Testis (tissue), 5 donors: ENCODE measurements at regions of chr15 and their contacts with region 1.

Region 1: GRCh38 chr15:98946301-98947255 is 61.0 kb downstream of the PGPEP1L start:
- DNase-seq: no peak
- H3K4me3 ChIP-seq: no peak overlapping the region
- H3K27ac ChIP-seq: peak overlapping the region in 1 of 2 donors; percentile 0
- H3K4me1 ChIP-seq: peaks cover 10% of the 10 kb centered on the region
- H3K27me3 ChIP-seq: no peaks in the 10 kb centered on the region
- CTCF ChIP-seq: no peak
- POLR2A ChIP-seq: no peak

Region 2: DNA sequence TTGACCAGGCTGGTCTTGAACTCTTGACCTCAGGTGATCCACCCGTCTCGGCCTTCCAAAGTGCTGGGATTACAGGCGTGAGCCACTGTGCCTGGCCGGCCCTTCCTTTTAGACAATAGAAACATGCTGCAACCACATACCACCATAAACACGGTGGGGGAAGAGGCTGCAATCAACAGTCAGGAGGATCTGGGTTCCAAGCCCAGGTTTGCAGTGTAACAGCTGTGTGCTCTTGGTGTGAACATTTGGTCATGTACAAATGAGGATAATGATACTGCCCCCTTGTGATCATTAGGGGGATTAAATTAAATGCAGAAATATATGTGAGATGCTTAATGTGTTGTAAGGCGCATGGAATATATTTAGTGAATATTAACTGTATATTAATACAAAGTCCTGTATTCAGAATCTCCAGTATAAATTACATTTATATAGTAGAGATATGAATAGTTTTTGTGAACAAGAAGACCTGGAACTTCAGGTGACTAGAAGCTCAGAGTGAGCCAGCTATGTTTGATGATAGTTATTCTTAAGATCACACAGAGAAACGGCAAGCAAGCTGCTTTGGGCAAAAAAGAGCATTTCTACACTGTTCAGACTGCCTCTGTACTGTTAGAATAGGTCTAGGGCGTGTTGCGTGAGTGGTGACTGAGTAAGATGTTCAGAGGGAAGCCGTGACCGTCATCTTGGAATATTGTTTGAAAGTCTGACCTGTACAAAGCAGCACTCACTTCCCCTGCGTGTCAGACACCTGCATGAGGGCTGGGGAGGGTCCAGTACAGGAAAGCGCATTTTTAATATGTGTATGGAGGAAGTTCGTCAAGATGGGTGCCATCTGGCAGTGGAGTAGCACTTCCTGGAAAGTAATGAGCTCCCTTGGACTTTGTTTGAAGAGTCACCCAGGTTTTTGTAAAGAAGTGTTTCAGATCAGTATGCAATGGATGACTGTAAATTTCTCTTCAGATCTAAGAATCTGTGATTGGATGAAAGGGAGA is 64.8 kb before region 1 on chr15:
- intact Hi-C with region 1: loop called (anchors 5 kb)
- DNase-seq: no peak
- H3K4me3 ChIP-seq: no peak overlapping the region
- H3K27ac ChIP-seq: no peak overlapping the region
- H3K4me1 ChIP-seq: peaks cover 27% of the 10 kb centered on the region
- H3K27me3 ChIP-seq: no peaks in the 10 kb centered on the region
- CTCF ChIP-seq: peak; percentile 35 to 60 (median 60)
- POLR2A ChIP-seq: no peak